ENCODE measurements at regions of chr9 and their contacts with region 1.

Region 1: DNA sequence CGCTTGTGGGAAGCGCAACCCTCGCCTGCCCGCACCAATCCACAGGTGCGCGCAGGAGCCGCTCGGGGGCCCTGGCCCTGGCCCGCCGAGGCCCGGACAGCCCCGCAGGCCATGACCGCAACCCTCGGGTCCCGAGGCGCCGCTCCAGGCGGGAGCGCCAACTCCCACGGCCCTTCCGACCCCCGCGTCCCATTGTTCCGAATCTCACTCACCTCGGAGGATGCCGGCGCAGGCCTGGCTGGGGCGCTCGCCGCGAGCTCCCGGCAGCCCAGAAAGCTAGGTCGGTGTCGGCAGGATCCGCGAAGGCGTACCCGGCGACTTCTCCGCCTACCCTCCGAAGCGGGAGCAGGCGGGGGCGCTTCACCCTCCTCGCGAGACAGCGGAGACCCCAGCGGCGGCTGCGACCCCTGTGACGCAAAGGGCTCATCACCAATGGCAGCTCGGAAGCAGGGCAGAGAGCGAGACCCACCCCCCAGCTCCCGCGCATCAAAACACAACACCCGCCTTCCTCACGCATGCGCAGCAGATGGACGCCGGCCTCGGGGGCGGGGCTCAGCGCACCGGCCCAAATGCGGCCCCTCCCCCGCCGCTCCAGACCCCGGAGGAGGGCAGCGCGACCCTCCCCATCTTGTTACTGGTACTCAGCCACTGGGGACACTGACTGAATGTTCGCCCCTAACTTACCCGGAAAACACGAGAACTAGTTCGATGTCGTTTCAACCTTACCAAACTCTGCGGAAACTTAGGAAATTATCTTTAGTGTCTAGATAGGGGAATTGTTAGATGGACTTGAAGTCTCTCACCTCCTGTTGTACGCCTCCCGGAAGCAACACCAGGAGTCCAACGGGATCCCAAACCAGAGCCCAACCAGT is 1.3 kb upstream of the SMIM27 start:
- DNase-seq: peak; percentile 86 to 99 (median 97)
- ATAC-seq: peak; percentile 82 to 87 (median 85)
- H3K4me3 ChIP-seq: peak overlapping the region; percentile 89 to 91
- H3K4me3 Mint-ChIP-seq: peak overlapping the region; percentile 91 to 98 (median 97)
- H3K27ac ChIP-seq: peak overlapping the region; percentile 99
- H3K27ac Mint-ChIP-seq: peak overlapping the region; percentile 99 to 100
- H3K4me1 ChIP-seq: peaks cover 13 to 24% of the 10 kb centered on the region in 2 experiments
- H3K4me1 Mint-ChIP-seq: peaks cover 57 to 65% (median 59%) of the 10 kb centered on the region in 3 donors
- H3K27me3 ChIP-seq: no peaks in the 10 kb centered on the region
- H3K27me3 Mint-ChIP-seq: no peaks in the 10 kb centered on the region

Region 2: DNA sequence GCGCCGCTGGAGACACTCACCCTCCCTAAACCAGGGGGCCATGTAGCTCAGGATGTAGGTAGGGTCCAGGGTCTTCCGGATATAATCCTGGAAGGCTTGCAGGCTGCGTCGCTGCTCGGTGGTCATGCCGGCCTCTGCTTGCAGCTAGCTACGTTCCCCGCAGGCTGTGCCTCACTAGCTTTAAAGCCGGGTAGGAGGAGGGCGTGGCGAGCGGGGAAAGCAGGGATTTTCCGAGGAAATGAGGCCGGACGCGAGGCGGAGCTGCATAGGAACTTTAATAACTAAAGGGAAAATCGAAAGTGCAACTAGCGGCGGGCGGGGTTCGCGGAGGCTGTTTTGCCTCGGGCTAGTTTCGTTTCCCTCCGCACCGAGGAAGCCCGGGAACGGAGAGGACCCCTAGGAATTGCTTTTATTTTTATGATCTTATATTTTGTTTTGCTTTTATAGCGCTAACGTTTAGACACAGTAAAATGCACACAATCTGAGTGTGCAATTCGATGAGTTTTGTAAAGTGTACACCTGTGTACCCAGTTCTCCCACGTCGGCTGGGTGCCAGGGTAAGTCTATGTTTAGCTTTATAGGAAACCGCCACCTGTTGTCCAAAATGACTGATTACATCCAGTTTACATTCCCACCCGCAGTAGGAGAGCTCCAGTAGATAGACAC is 24.6 kb before region 1 on chr9 and contains the start of gene RIGI:
- CTCF ChIA-PET with region 1: interaction called, 8 to 31 read pairs
- POLR2A ChIA-PET with region 1: interaction called, 5 to 11 read pairs
- DNase-seq: peak; percentile 40 to 92 (median 76)
- ATAC-seq: peak; percentile 78 to 84 (median 83)
- H3K4me3 ChIP-seq: peak within 1 kb of the TSS; percentile 77 to 85
- H3K4me3 Mint-ChIP-seq: peak within 1 kb of the TSS; percentile 87 to 98 (median 92)
- H3K27ac ChIP-seq: peak within 1 kb of the TSS; percentile 74
- H3K27ac Mint-ChIP-seq: peak within 1 kb of the TSS; percentile 97 to 99
- H3K4me1 ChIP-seq: peaks cover 16 to 17% of the 10 kb centered on the region in 2 experiments
- H3K4me1 Mint-ChIP-seq: peaks cover 49 to 64% (median 57%) of the 10 kb centered on the region in 3 donors
- H3K27me3 ChIP-seq: no peaks in the 10 kb centered on the region
- H3K27me3 Mint-ChIP-seq: no peaks in the 10 kb centered on the region
- total RNA-seq, gene RIGI: 14.0 to 27.1 (median 19.3) TPM

Measured in T-cell (primary cell).